ENCODE measurements at regions of chr2 and their contacts with region 1.

Region 1: DNA sequence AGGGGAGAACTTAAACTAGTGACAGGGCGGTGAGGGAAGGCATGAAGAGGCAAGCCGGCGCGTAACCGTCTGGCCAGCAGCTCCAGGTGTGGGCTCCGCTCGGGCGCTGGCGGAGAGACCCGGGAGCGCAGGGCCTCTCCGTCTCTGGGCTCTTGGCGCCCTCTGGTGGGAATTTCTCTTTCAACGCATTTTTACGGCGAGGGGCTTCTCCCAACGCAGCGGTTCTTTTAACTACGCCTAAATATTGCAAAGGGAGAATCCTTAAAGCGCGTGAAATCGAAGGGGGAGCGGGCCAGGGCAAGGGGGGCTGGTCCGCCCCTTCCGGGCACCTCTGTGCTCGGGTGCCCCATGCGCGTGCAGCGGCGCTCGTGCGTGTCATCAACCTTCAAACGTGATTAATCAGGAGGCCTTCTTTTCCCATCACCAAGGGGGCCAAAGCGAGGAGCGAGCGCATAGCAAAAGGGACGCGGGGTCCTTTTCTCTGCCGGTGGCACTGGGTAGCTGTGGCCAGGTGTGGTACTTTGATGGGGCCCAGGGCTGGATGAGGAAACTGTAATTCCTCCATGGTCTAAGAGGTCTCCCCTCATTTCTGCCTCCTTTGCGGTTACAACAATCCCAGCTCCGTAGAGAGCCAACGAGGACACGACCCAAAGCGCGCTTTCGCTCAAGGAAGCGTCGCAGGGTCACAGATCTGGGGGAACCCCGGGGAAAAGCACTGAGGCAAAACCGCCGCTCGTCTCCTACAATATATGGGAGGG is 762 bp upstream of the GAD1 start:
- DNase-seq: peak; percentile 85 to 88 (median 87)
- ATAC-seq: peak; percentile 87
- H3K4me3 ChIP-seq: peak overlapping the region; percentile 39
- H3K27ac ChIP-seq: no peak overlapping the region
- H3K4me1 ChIP-seq: peaks cover 6 to 48% of the 10 kb centered on the region in 2 experiments
- H3K27me3 ChIP-seq: peaks cover 0 to 7% of the 10 kb centered on the region in 2 experiments; a peak in 1 of 5 replicates
- CTCF ChIP-seq: peak; percentile 94 to 98 (median 95)
- EP300 ChIP-seq: no peak
- POLR2A ChIP-seq: no peak
- RAD21 ChIP-seq: peak; percentile 96

Region 2: GRCh38 chr2:169933124-169933711 is 882.7 kb before region 1 on chr2:
- CTCF ChIA-PET with region 1: interaction called, 26 read pairs
- POLR2A ChIA-PET with region 1: no interaction called
- in situ Hi-C with region 1: loop called (anchors 25 kb)
- intact Hi-C with region 1: loop called (anchors 2 kb)
- DNase-seq: peak; percentile 52 to 66 (median 65)
- ATAC-seq: peak; percentile 90
- H3K4me3 ChIP-seq: no peak overlapping the region
- H3K27ac ChIP-seq: no peak overlapping the region
- H3K4me1 ChIP-seq: no peaks in the 10 kb centered on the region
- H3K27me3 ChIP-seq: no peaks in the 10 kb centered on the region
- CTCF ChIP-seq: peak; percentile 64 to 95 (median 75); a peak in 5 of 6 replicates
- EP300 ChIP-seq: no peak
- POLR2A ChIP-seq: no peak
- RAD21 ChIP-seq: peak; percentile 94 to 95

Region 3: GRCh38 chr2:170324640-170325046 is 491.3 kb before region 1 on chr2:
- CTCF ChIA-PET with region 1: interaction called, 34 read pairs
- POLR2A ChIA-PET with region 1: interaction called, 3 read pairs
- in situ Hi-C with region 1: no loop called
- intact Hi-C with region 1: loop called (anchors 1 kb)
- DNase-seq: peak; percentile 42 to 85 (median 60)
- ATAC-seq: peak; percentile 95
- H3K4me3 ChIP-seq: no peak overlapping the region
- H3K27ac ChIP-seq: no peak overlapping the region
- H3K4me1 ChIP-seq: peaks cover 0 to 22% of the 10 kb centered on the region in 2 experiments; a peak in 4 of 5 replicates
- H3K27me3 ChIP-seq: no peaks in the 10 kb centered on the region
- CTCF ChIP-seq: peak; percentile 93 to 95 (median 93)
- EP300 ChIP-seq: peak; percentile 45; the same call in 1 of the 2 replicates
- POLR2A ChIP-seq: no peak
- RAD21 ChIP-seq: peak; percentile 99

Region 4: DNA sequence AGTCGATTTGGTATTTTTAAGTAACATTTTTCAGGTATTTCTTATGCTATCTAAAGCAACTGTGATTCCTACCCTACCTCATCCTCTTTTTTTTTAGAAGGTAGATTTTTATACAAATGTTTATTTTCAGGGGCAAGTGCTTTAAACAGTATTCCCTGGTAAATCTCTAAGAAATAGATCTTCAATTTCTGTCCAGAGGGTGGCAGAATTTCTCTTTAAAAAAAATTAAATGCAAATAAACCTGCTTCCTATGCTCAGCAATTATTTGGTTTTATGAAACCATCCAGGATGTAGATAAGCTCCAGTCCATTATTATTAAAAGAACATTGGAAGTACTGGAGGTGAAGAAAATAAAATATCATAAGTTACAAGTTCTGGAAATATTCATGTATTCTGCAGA is 446.0 kb before region 1 on chr2:
- CTCF ChIA-PET with region 1: interaction called, 28 read pairs
- POLR2A ChIA-PET with region 1: interaction called, 5 read pairs
- in situ Hi-C with region 1: loop called (anchors 10 kb)
- intact Hi-C with region 1: loop called (anchors 1 kb)
- DNase-seq: peak in 1 of 4 experiments; percentile 51
- ATAC-seq: peak; percentile 49
- H3K4me3 ChIP-seq: no peak overlapping the region
- H3K27ac ChIP-seq: no peak overlapping the region
- H3K4me1 ChIP-seq: peaks cover 0 to 28% of the 10 kb centered on the region in 2 experiments; a peak in 3 of 5 replicates
- H3K27me3 ChIP-seq: no peaks in the 10 kb centered on the region
- CTCF ChIP-seq: peak in 1 of 3 experiments; percentile 63; a peak in 3 of 6 replicates
- EP300 ChIP-seq: no peak
- POLR2A ChIP-seq: no peak
- RAD21 ChIP-seq: peak; percentile 68 to 75

Region 5: DNA sequence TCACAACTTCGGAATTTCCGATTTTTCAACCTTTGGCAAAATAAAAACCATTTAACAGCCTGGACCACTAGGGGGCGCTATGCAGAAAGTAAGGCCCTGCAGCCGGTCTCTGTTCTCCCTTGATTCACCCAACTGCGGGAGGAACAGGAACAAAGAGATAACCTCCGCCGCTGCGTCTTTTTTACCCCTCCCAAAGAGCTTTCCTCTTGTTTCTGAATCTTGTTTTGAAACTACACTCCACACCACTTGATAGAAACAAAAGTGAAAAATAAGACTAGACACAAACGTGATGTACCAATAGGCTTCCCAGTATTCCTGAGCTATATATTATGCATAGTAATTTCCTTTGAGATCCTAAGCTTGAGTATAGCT is 406.8 kb before region 1 on chr2:
- CTCF ChIA-PET with region 1: interaction called, 12 read pairs
- POLR2A ChIA-PET with region 1: interaction called, 3 read pairs
- in situ Hi-C with region 1: no loop called
- intact Hi-C with region 1: loop called (anchors 1 kb)
- DNase-seq: peak; percentile 79 to 90 (median 84)
- ATAC-seq: peak; percentile 95
- H3K4me3 ChIP-seq: no peak overlapping the region
- H3K27ac ChIP-seq: no peak overlapping the region
- H3K4me1 ChIP-seq: 0 out of 5 replicates have a peak, but pooled peaks cover 0 to 2% of the 10 kb centered on the region in 2 experiments
- H3K27me3 ChIP-seq: no peaks in the 10 kb centered on the region
- CTCF ChIP-seq: peak; percentile 80 to 95 (median 92)
- EP300 ChIP-seq: 0 out of 2 replicates have a peak, but pooled peaks have one; percentile 37
- POLR2A ChIP-seq: no peak
- RAD21 ChIP-seq: peak; percentile 81 to 84

Region 6: GRCh38 chr2:170525566-170525900 is 290.4 kb before region 1 on chr2:
- CTCF ChIA-PET with region 1: no interaction called
- POLR2A ChIA-PET with region 1: no interaction called
- in situ Hi-C with region 1: no loop called
- intact Hi-C with region 1: loop called (anchors 10 kb)
- DNase-seq: peak in 1 of 4 experiments; percentile 34
- ATAC-seq: no peak
- H3K4me3 ChIP-seq: no peak overlapping the region
- H3K27ac ChIP-seq: no peak overlapping the region
- H3K4me1 ChIP-seq: no peaks in the 10 kb centered on the region; a peak in 3 of 5 replicates
- H3K27me3 ChIP-seq: peaks cover 0 to 6% of the 10 kb centered on the region in 2 experiments; a peak in 2 of 5 replicates
- CTCF ChIP-seq: no peak
- EP300 ChIP-seq: no peak
- POLR2A ChIP-seq: no peak
- RAD21 ChIP-seq: no peak

Region 7: GRCh38 chr2:170873035-170873692 is 57.2 kb after region 1 on chr2:
- CTCF ChIA-PET with region 1: interaction called, 3 read pairs
- POLR2A ChIA-PET with region 1: no interaction called
- in situ Hi-C with region 1: no loop called
- intact Hi-C with region 1: loop called (anchors 2 kb)
- DNase-seq: peak; percentile 86 to 91 (median 88)
- ATAC-seq: peak; percentile 99
- H3K4me3 ChIP-seq: no peak overlapping the region
- H3K27ac ChIP-seq: peak overlapping the region; percentile 49
- H3K4me1 ChIP-seq: no peaks in the 10 kb centered on the region; a peak in 2 of 5 replicates
- H3K27me3 ChIP-seq: peaks cover 4 to 10% of the 10 kb centered on the region in 2 experiments; a peak in 3 of 5 replicates
- CTCF ChIP-seq: peak; percentile 92 to 98 (median 96)
- EP300 ChIP-seq: no peak
- POLR2A ChIP-seq: no peak
- RAD21 ChIP-seq: peak; percentile 72 to 86